ENCODE measurements at regions of chr16 and their contacts with region 1.

Region 1: DNA sequence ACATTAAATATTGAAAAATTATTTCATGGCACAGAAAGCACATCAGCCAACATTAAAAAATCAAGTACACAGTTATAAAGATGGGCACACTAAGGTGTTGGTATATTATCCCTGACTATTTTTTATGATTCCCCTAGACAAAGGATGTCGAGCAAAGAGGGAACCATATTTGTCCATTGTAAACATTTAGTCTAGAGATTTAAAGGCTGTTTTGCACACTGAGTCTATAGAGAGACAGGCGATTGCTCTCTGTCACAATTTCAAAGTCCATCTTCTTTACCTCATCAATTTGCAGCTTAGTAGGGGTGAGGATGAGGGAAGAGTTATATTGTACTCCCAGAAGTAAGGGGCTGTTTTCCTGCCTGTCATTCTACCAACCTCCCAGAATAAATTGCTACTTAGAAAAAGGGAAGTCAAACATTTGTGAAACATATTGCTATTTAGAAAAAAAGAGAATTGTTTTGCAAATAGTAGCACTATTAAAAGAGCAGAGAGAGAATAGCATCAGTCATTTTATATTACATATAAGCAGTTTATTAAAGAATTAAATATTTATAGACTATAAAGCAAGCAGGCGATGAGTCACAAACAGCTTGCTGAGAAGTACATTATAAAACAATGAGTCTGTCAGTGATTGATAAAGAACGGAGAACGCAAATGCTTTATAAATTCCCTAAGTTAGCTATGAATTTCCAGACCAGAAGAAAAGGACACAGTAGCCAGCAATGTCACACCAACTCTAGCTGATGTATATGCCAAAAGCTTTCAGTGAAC is 270.6 kb upstream of the PMFBP1 start:
- DNase-seq: no peak
- ATAC-seq: no peak
- H3K4me3 ChIP-seq: no peak overlapping the region
- H3K4me3 Mint-ChIP-seq: no peak overlapping the region
- H3K27ac ChIP-seq: no peak overlapping the region
- H3K27ac Mint-ChIP-seq: no peak overlapping the region
- H3K4me1 ChIP-seq: no peaks in the 10 kb centered on the region
- H3K4me1 Mint-ChIP-seq: no peaks in the 10 kb centered on the region
- H3K27me3 ChIP-seq: no peaks in the 10 kb centered on the region
- H3K27me3 Mint-ChIP-seq: no peaks in the 10 kb centered on the region
- CTCF ChIP-seq: no peak

Region 2: DNA sequence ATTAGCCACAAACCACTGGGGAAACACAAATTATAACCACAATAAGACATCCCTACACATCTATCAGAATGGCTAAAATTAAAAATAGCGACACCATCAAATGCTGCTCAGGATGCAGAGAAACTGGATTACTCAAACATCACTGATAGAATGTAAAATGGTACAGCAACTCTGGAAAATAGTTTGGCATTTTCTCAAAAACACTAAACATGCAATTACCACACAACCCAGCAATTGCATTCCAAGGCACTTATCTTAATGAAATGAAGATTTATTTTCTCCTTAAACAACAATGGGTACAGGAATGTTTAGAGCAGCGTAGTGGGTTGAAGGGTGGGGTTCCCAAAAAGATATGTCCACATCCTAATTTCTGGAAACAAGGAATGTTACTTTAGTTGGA is 38.3 kb after region 1 on chr16:
- CTCF ChIA-PET with region 1: no interaction called
- POLR2A ChIA-PET with region 1: no interaction called
- intact Hi-C with region 1: loop called in 1 of 2 experiments (anchors 1 kb)
- DNase-seq: no peak
- ATAC-seq: no peak
- H3K4me3 ChIP-seq: no peak overlapping the region
- H3K4me3 Mint-ChIP-seq: no peak overlapping the region
- H3K27ac ChIP-seq: no peak overlapping the region
- H3K27ac Mint-ChIP-seq: no peak overlapping the region
- H3K4me1 ChIP-seq: no peaks in the 10 kb centered on the region
- H3K4me1 Mint-ChIP-seq: peaks cover 27% of the 10 kb centered on the region
- H3K27me3 ChIP-seq: no peaks in the 10 kb centered on the region
- H3K27me3 Mint-ChIP-seq: no peaks in the 10 kb centered on the region
- CTCF ChIP-seq: no peak